ENCODE measurements at regions of chr17 and their contacts with region 1.

Region 1: GRCh38 chr17:63267846-63268245 is 178.3 kb downstream of the CYB561 start:
- DNase-seq: no peak
- ATAC-seq: no peak
- H3K4me3 ChIP-seq: no peak overlapping the region
- H3K27ac ChIP-seq: no peak overlapping the region
- H3K4me1 ChIP-seq: no peaks in the 10 kb centered on the region
- H3K27me3 ChIP-seq: no peaks in the 10 kb centered on the region
- CTCF ChIP-seq: no peak

Region 2: DNA sequence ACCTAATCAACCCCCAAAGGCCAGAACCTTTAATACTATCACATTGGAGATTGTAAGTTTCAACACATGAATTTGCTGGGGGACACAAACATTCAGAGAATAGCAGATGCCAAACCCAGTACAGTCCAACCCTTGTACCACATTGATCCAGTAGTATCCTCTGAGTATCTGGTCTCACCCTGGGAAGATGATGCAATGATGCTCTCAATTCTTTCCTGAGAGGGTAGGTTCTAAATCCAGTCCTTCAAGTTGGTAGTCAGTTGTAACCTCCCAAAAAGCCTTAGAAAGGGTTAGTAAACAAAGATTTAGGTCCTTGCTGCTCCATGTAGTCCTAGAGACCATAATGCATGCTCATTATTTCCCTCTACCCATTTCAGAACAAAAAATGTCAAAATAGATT is 53.2 kb before region 1 on chr17:
- intact Hi-C with region 1: loop called in 1 of 10 experiments (anchors 2 kb)
- DNase-seq: no peak
- ATAC-seq: no peak
- H3K4me3 ChIP-seq: no peak overlapping the region
- H3K27ac ChIP-seq: no peak overlapping the region
- H3K4me1 ChIP-seq: no peaks in the 10 kb centered on the region
- H3K27me3 ChIP-seq: no peaks in the 10 kb centered on the region
- CTCF ChIP-seq: no peak